ENCODE measurements at regions of chr9 and their contacts with region 1.

Region 1: DNA sequence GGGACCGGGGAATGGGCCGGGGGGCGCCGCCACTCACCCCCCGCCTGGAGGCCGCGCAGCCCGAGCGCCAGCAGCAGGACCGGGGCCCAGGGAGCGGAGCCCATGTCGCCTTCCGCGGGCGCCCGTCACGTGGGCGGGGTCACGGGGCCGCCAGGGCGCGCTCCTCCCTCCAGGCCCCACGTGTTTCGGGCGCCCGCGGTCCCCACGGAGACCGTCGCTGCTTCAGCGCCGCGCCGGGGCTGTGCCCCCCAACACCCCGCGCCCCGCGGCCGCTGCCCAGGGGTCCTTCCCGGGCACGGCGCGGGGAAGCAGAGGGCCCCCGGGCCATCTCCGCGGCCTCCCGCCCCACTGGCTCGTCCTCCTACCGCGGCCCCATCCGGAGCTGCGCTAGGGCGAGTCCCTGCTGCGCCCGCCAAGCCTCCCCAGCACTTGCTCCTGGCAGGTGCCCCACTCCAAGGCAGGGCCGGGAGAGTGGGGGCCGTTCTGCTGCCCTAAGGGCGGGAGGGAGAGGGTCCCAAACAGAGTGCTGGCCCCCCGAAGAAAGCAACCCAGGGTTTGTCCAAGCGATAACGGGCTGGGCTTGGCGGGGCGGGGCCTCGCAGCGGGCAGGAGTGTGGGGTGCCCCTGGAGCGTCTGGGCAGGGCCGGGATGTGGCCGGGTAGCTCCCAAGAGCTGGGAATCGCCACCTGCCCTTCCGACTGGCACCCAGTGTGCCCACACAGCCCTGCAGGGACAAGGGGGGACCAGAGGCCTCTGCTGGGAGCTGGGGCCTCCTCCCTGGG is at the start of gene DPP7:
- DNase-seq: peak; percentile 90
- ATAC-seq: peak; percentile 93
- H3K4me3 ChIP-seq: peak within 1 kb of the TSS; percentile 78
- H3K27ac ChIP-seq: peak within 1 kb of the TSS; percentile 58
- H3K4me1 ChIP-seq: peaks cover 7% of the 10 kb centered on the region
- H3K27me3 ChIP-seq: no peaks in the 10 kb centered on the region
- CTCF ChIP-seq: no peak
- total RNA-seq, gene DPP7: 183 TPM

Region 2: GRCh38 chr9:137227063-137227852 is 112.5 kb after region 1 on chr9 and contains the start of gene RNF224:
- intact Hi-C with region 1: loop called (anchors 5 kb)
- DNase-seq: peak; percentile 93
- ATAC-seq: peak; percentile 68
- H3K4me3 ChIP-seq: no peak within 1 kb of the TSS
- H3K27ac ChIP-seq: peak within 1 kb of the TSS; percentile 82
- H3K4me1 ChIP-seq: peaks cover 14% of the 10 kb centered on the region
- H3K27me3 ChIP-seq: peaks cover 40% of the 10 kb centered on the region
- CTCF ChIP-seq: peak; percentile 90
- total RNA-seq, gene RNF224: 0.35 TPM